Colonic mucosa (tissue), 4 donors: ENCODE measurements at regions of chr15 and their contacts with region 1.

Region 1: GRCh38 chr15:77543159-77543882 is 89.4 kb downstream of the LINGO1 start:
- DNase-seq: peak; percentile 86
- H3K4me3 ChIP-seq: peak overlapping the region; percentile 50
- H3K27ac ChIP-seq: no peak overlapping the region
- H3K4me1 ChIP-seq: peaks cover 10% of the 10 kb centered on the region
- H3K27me3 ChIP-seq: no peaks in the 10 kb centered on the region
- CTCF ChIP-seq: peak; percentile 98

Region 2: DNA sequence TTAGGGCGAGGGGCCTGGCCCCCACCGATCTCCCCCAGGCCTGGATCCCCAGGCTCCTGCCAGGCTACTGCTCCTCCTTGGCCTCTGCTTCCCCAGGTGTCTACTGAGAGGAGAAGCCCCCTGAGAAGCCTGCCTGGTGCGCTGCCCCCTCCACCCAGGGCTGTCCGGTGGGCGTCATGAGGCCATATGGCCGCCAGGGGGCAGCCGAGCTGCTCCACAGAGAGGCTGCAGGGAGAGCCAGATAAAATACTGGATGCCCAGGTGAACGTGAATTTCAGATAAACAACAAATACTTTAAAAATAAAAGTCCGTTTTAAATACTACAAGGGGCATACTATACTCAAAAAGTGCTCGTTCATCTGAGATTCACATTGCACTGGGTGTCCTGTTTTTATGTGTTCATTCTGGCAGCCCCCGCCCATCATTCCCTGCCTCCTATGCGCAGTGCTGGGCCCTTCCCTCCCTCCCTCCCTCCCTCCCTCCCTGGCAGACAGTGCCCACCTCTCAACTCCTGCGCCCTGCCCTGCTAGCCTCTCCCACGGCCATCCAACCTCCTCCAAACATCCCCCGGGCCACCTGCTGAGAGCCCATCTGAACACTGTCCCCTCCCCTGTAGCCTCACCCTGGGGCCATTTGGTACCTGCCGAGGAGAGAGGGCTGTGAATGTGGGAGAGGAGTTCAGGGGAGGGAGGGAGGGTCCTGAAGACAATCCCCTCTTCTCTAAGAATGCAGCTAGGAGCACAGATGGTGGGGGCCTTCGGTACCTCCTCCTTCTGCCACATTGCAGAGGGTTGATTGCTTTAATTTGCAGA is 518.8 kb before region 1 on chr15:
- intact Hi-C with region 1: loop called (anchors 5 kb)
- DNase-seq: peak; percentile 74
- H3K4me3 ChIP-seq: no peak overlapping the region
- H3K27ac ChIP-seq: no peak overlapping the region
- H3K4me1 ChIP-seq: peaks cover 5% of the 10 kb centered on the region
- H3K27me3 ChIP-seq: no peaks in the 10 kb centered on the region
- CTCF ChIP-seq: peak; percentile 95